Spleen (tissue), 13 donors: ENCODE measurements at regions of chr5 and their contacts with region 1.

Region 1: DNA sequence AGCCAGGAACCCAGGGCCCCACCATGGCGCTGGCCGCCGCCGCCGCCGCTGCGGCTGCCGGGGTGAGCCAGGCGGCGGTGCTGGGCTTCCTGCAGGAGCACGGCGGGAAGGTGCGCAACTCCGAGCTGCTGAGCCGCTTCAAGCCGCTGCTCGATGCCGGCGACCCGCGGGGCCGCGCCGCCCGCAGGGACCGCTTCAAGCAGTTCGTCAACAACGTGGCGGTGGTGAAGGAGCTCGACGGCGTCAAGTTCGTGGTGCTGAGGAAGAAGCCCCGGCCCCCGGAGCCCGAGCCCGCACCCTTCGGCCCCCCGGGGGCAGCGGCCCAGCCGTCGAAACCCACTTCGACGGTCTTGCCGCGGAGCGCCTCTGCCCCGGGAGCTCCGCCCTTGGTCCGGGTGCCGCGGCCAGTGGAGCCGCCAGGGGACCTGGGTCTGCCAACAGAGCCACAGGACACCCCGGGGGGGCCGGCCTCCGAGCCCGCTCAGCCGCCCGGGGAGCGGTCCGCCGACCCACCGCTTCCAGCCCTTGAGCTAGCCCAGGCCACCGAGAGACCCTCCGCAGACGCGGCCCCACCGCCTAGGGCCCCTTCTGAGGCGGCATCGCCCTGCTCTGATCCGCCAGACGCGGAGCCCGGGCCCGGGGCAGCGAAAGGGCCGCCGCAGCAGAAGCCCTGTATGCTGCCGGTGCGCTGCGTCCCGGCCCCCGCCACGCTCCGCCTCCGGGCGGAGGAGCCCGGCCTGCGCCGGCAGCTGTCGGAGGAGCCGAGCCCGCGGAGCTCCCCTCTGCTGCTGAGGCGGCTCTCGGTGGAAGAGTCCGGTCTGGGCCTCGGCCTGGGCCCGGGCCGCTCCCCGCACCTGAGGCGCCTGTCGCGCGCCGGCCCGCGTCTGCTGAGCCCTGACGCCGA is 749 bp downstream of the SOWAHA start:
- DNase-seq: peak; percentile 74
- H3K4me3 ChIP-seq: peak overlapping the region in 7 of 8 donors; percentile 22 to 65 (median 34)
- H3K27ac ChIP-seq: no peak overlapping the region
- H3K4me1 ChIP-seq: peaks cover 9 to 25% (median 19%) of the 10 kb centered on the region in 6 donors
- H3K27me3 ChIP-seq: peaks cover 0 to 63% (median 49%) of the 10 kb centered on the region in 7 donors
- CTCF ChIP-seq: no peak
- POLR2A ChIP-seq: no peak

Region 2: GRCh38 chr5:132456296-132457001 is 357.4 kb before region 1 on chr5:
- intact Hi-C with region 1: no loop called
- DNase-seq: peak; percentile 95
- H3K4me3 ChIP-seq: peak overlapping the region in 2 of 8 donors; percentile 6 to 55
- H3K27ac ChIP-seq: peak overlapping the region; percentile 89 to 99 (median 95)
- H3K4me1 ChIP-seq: peaks cover 58 to 100% (median 90%) of the 10 kb centered on the region in 6 donors
- H3K27me3 ChIP-seq: no peaks in the 10 kb centered on the region
- CTCF ChIP-seq: peak in 1 of 11 experiments; percentile 11
- POLR2A ChIP-seq: peak in 2 of 3 donors; percentile 6 to 24

Region 3: GRCh38 chr5:132526290-132526973 is 287.4 kb before region 1 on chr5:
- intact Hi-C with region 1: loop called (anchors 10 kb)
- DNase-seq: no peak
- H3K4me3 ChIP-seq: peak overlapping the region in 2 of 8 donors; percentile 17 to 22
- H3K27ac ChIP-seq: no peak overlapping the region
- H3K4me1 ChIP-seq: peaks cover 13 to 47% (median 23%) of the 10 kb centered on the region in 6 donors
- H3K27me3 ChIP-seq: no peaks in the 10 kb centered on the region
- CTCF ChIP-seq: peak; percentile 48 to 84 (median 74)
- POLR2A ChIP-seq: no peak

Region 4: GRCh38 chr5:133265720-133266526 is 452.1 kb after region 1 on chr5:
- intact Hi-C with region 1: no loop called
- DNase-seq: peak; percentile 59
- H3K4me3 ChIP-seq: no peak overlapping the region
- H3K27ac ChIP-seq: no peak overlapping the region
- H3K4me1 ChIP-seq: no peaks in the 10 kb centered on the region
- H3K27me3 ChIP-seq: peaks cover 0 to 9% (median 0%) of the 10 kb centered on the region in 7 donors
- CTCF ChIP-seq: no peak
- POLR2A ChIP-seq: no peak